ENCODE measurements at regions of chr1 and their contacts with region 1.

Region 1: DNA sequence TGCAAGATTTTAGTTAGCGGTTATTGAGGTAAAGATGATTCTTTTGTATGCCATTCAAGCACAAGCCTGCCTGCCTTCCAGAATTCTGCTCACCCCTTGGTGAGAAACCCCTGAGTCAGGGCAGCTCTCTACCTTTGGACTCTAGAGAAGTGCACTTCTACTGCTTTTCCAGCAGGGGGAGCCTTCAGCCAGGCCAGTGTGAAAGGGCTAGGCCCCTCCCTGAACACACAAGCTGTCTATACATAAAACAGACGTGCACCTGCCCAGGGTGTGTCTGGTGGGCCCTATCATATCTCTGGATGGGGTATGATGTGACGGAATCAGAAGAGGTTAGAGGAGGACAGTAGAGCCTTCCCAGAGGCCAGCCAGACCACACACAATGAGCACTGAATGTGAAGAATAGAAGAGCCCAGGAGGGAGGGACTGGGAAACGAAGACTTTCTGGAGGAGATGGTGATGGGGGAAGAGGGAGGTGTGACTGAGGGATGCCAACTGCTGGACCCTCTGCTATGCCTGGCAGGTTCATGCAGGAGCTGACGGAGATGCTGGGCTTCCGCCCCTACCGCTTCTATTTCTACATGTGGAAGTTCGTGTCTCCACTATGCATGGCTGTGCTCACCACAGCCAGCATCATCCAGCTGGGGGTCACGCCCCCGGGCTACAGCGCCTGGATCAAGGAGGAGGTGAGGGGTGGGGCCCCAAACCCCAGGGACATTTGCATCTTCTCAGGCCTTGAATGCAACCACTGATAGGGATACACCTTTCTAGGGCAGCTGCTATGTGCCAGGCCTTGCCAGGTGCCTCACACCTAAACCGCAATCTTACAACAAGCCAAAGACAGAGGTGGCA is 13.0 kb upstream of the KCNC4 start:
- DNase-seq: peak; percentile 58

Region 2: DNA sequence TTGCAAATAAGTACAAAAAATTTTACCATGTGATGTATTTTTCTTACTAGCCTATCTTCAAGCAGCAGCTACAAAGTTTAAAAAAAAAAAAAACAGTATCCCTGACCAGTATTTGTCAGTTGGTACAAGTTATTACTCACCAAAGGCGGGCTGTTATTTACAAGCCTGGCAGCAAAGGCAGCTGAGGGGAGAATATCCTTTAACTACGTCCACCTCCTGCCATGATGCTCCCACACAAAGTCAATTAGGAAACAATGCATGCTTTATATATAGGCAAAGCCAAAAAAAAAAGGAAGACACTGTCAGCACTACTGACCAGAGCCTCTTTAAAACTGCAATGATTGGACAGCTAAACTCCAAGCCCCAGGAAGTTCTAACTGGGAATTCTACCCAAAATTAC is 784.6 kb before region 1 on chr1:
- in situ Hi-C with region 1: no loop called
- DNase-seq: no peak

Region 3: DNA sequence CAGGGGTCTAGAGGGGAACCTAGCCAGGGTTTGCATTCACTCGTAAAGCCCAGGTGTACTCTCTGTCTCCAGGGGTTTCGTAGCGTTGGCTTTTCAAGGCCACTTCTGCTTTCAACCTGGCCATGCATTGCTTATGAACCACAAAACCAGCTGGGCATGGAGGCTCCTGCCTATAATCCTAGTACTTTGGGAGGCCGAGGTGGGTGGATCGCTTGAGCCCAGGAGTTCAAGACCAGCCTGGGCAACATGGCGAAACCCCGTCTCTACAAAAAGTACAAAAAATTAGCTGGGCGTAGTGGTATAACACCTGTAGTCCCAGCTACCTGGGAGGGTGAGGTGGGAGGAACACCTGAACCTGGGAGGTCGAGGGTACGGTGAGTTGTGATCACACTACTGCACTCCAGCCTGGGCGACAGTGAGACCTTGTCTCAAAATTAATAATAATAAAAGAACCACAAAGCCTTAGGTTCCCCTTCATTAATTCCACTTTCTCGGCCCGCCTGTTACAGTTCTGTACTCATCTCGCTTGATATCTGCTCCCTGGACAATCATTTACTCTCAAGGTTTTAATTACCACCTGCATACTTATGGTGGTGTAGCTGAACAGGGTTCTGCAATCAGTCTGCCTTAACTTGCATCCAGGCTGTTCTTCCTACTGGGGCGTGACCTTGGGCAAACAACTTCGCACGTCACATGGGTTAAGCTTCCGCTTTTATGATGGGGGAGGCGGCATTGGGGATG is 187.6 kb after region 1 on chr1:
- in situ Hi-C with region 1: no loop called
- DNase-seq: no peak

Region 4: GRCh38 chr1:110460253-110461220 is 263.4 kb after region 1 on chr1:
- in situ Hi-C with region 1: loop called (anchors 25 kb)
- DNase-seq: peak; percentile 90

Measured in KBM-7 (cell line).